ENCODE measurements at regions of chr1 and their contacts with region 1.

Region 1: DNA sequence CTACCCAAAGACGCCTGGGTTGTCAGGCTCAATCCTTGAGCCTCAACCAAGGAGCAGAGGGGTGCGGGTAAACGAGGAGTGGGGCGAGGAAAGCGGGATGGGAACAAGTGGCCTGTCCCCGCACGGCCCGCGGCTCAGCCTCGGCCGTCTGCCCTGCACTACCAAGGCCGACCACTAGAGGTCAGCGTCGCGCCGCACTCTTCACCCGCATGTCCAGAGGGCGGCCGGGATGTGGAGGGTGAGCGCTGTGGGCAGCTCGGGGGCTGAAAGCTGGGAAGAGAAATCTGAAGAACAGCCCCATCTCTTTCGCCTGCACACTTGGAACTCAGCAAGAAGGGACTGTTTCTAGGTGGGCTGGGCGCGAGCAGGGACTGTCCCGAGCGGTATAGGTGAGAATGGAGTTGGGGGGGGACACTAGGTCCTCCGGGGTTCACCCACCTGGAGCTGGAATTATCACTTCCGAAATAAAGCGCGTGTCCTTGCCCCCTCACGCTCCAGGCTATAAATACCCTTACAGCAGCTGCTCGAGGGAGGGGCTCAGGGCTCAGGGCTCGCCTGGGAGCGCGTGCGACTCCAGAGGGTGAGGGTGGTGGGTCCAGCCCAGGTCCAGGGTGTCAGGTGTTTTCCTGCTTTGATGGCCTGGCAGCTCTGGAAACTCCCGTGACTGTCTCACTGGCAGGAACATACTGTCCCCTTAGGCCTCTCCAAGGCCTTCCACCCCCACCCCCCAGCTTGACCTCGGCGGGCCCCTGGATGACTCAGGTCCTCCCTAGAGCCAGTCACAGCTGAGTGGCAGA is 9.8 kb downstream of the SLC30A2 start:
- DNase-seq: peak; percentile 20 to 87
- H3K4me3 ChIP-seq: peak overlapping the region; percentile 62 to 92
- H3K27ac ChIP-seq: peak overlapping the region; percentile 62 to 75
- H3K4me1 ChIP-seq: peaks cover 3 to 8% of the 10 kb centered on the region in 2 donors
- H3K27me3 ChIP-seq: no peaks in the 10 kb centered on the region
- CTCF ChIP-seq: peak; percentile 97 to 100 (median 100)

Region 2: DNA sequence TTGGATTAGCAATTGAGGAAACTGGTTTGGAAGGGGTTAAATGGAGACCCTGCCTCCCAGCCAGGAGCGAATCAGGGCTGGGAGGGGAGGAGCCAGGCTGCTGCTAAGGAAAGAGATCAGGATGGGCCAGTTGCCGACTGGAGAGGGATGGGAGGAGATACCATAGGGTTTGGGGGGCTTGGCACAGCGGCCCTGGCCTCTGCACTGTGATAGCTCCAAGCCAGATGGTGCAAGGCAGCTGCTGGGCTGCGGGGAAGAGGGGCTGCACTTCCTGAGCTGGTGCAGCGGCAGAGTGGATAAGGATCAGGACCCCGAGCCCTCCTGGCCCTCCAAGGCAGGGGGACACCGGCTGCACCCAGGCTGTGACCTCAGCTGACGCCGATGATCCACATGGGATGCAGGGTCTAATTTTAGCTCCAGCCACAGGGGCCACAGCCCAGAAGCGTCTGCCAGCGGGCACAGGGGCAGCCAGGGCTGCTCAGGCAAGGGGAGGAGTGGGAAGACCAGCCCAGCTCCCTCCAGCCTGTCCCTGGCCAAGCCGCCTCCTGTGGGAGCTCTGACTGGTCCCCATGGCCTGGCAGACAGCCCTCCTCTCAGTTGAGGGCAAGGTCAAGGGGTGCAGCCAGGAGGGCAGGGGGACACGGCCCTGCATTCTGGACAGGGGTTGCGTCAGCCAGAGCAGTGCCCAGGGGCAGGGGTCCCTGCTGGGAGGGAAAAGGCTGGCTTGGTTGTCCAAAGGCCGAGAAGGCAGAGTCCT is 14.3 kb before region 1 on chr1 and contains the start of gene EXTL1:
- intact Hi-C with region 1: no loop called
- DNase-seq: no peak
- H3K4me3 ChIP-seq: peak within 1 kb of the TSS in 1 of 2 donors; percentile 54
- H3K27ac ChIP-seq: no peak within 1 kb of the TSS
- H3K4me1 ChIP-seq: peaks cover 0 to 6% of the 10 kb centered on the region in 2 donors
- H3K27me3 ChIP-seq: no peaks in the 10 kb centered on the region
- CTCF ChIP-seq: no peak
- total RNA-seq, gene EXTL1: 0.85 TPM

Region 3: GRCh38 chr1:26084091-26084561 is 48.0 kb after region 1 on chr1:
- intact Hi-C with region 1: no loop called
- DNase-seq: no peak
- H3K4me3 ChIP-seq: no peak overlapping the region
- H3K27ac ChIP-seq: no peak overlapping the region
- H3K4me1 ChIP-seq: no peaks in the 10 kb centered on the region
- H3K27me3 ChIP-seq: no peaks in the 10 kb centered on the region
- CTCF ChIP-seq: no peak

Region 4: GRCh38 chr1:26111530-26112406 is 75.6 kb after region 1 on chr1 and contains the start of gene PDIK1L:
- intact Hi-C with region 1: loop called (anchors 2 kb)
- DNase-seq: peak; percentile 61 to 95
- H3K4me3 ChIP-seq: peak within 1 kb of the TSS; percentile 92 to 100
- H3K27ac ChIP-seq: peak within 1 kb of the TSS; percentile 89 to 90
- H3K4me1 ChIP-seq: peaks cover 0 to 16% of the 10 kb centered on the region in 2 donors
- H3K27me3 ChIP-seq: no peaks in the 10 kb centered on the region
- CTCF ChIP-seq: no peak
- total RNA-seq, gene PDIK1L: 4.0 TPM

Region 5: DNA sequence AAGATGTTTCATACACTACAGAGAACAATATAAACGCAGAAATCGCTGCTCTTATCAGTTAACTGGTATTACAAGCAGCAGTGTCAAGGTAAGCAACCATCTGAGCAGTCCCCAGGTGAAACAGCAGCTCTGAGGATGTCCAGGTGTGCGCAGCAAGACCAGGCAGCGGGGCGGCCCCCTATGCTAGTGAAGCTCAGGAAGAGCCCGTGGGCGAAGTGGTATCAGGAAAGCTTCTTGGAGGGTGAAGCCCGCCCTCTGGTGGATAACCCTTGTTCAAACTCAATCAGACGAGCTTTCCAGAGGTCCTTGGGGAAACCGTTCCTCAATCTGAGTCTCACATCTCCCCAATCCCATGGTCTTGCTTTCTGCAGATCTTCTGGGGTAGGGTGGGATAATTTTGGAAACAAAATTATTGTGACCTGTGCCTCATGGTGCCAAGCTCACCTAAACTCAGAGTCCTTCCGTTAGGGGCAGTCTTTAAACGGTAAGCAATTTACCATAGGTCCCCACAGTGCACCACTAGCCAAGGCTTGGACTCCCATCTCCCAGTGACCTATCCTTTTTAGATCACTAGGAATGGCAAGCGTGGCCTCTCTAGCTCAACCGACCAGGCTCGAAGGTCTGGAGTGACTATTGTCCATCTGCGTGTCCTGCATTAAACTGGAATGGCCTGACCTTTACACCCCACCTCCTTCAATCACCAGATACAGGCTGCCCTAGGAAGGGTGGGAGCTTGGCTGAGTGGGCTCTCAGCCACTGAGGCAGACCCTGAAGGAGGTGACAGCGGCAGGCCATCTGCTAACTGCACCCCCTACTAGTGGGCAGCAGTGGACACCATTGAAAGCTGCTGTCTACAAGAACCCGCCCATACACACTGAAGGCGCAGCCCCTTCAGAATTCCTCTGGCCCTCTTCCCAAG is 109.1 kb after region 1 on chr1:
- intact Hi-C with region 1: loop called (anchors 1 kb)
- DNase-seq: peak in 1 of 2 donors; percentile 88
- H3K4me3 ChIP-seq: no peak overlapping the region
- H3K27ac ChIP-seq: no peak overlapping the region
- H3K4me1 ChIP-seq: no peaks in the 10 kb centered on the region
- H3K27me3 ChIP-seq: peaks cover 5% of the 10 kb centered on the region
- CTCF ChIP-seq: peak; percentile 57 to 78 (median 75)

Measured in ascending aorta (tissue), 2 donors.